ENCODE measurements at regions of chr2 and their contacts with region 1.

Region 1: GRCh38 chr2:231713730-231714430 is 5.6 kb downstream of the PTMA start:
- DNase-seq: peak; percentile 76 to 97
- H3K4me3 ChIP-seq: no peak overlapping the region
- H3K27ac ChIP-seq: peak overlapping the region; percentile 69; the same call in 1 of the 2 replicates
- H3K4me1 ChIP-seq: peaks cover 0 to 28% (median 19%) of the 10 kb centered on the region in 4 experiments; a peak in 6 of 7 replicates
- H3K27me3 ChIP-seq: no peaks in the 10 kb centered on the region
- CTCF ChIP-seq: peak in 2 of 3 experiments; percentile 90 to 91; a peak in 3 of 4 replicates
- EP300 ChIP-seq: no peak; a peak in 1 of 3 replicates
- POLR2A ChIP-seq: peak in 1 of 2 experiments; percentile 99; a peak in 2 of 3 replicates
- RAD21 ChIP-seq: peak; percentile 43 to 59

Region 2: DNA sequence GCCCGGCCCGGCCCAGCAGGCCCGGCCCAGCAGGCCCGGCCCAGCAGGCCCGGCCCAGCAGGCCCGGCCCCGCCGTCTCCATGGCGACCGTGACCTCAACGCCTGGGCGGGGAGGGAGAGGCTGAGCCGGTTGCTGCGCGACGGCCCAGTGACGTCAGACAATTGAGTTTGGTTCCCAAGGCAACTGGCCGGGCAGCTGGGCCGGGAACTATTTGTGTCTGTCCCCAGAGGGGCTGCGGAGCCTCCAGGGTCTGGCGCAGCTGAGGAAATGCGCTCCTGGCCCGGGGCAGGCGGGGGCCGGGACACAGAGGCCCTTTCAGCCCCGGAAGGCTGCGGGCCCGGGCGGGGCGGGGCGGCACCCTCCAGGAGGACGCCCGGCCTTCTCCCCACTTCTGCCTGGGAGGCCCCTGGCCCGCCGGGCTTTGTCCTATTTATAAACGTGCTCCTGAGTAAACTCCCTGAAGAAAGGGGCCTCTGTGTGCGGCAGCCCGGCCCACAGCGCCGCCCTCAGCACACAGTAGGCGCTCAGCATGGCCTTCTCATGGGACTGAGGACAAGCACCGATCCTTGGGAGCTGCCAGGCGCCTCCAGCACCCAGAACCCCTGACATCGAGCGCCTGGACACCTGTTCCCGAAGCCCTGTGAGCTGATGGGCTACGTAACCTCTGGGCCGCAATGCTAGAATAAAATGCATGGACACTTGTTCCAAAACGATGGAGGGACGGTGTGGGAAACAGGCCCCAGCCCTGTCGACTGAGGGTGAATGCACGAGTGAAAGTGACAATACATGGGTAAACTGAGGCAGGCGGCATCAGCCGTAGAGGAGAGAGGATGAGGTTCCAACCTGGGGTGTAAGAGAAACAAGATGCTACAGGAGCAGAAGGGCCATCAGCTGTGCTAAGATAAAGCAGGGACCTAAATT is 108.9 kb before region 1 on chr2:
- CTCF ChIA-PET with region 1: interaction called, 90 read pairs
- POLR2A ChIA-PET with region 1: interaction called, 141 read pairs
- DNase-seq: peak; percentile 93 to 99
- H3K4me3 ChIP-seq: peak overlapping the region; percentile 25 to 56 (median 30); a peak in 7 of 8 replicates
- H3K27ac ChIP-seq: peak overlapping the region; percentile 94
- H3K4me1 ChIP-seq: peaks cover 6 to 29% (median 21%) of the 10 kb centered on the region in 4 experiments
- H3K27me3 ChIP-seq: no peaks in the 10 kb centered on the region
- CTCF ChIP-seq: no peak
- EP300 ChIP-seq: peak in 1 of 2 experiments; percentile 30; a peak in 1 of 3 replicates
- POLR2A ChIP-seq: peak in 1 of 2 experiments; percentile 83; a peak in 1 of 3 replicates
- RAD21 ChIP-seq: peak in 1 of 2 experiments; percentile 18; a peak in 2 of 4 replicates

Region 3: DNA sequence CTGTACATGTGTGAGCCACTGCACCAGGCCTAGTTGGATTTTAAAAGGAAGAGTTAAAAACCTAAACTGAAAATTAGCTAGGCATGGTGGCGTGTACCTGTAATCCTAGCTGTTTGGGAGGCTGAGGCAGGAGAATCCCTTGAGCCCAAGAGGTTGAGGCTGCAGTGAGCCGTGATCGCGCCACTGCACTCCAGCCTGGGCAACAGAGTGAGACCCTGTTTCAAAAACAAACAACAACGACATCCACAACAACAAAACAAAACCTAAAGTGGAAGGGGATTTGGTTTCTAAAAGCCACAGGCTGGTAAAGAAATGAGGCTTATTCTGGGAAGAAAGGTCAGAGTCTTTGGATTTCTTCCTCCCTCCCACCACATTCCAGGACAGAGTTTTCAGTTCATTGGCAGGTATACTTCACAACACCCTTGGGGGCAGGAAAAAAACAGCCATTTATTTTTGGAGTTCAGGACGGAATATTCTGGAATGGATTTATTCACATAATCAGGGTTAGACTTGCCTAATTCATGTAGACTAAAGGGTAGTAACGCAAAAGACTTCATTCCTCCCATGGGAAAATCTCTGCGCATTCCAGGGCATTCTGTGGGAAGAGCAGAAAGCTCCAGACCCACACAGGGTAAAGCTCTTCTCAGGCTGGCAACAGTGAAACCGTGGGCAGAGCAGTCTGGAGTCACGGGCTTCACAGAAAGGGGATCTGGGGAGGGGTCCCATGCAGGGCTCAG is 86.3 kb before region 1 on chr2:
- CTCF ChIA-PET with region 1: interaction called, 11 read pairs
- POLR2A ChIA-PET with region 1: interaction called, 7 read pairs
- DNase-seq: no peak
- H3K4me3 ChIP-seq: no peak overlapping the region
- H3K27ac ChIP-seq: no peak overlapping the region
- H3K4me1 ChIP-seq: no peaks in the 10 kb centered on the region
- H3K27me3 ChIP-seq: no peaks in the 10 kb centered on the region
- CTCF ChIP-seq: no peak
- EP300 ChIP-seq: no peak
- POLR2A ChIP-seq: no peak
- RAD21 ChIP-seq: no peak

Region 4: GRCh38 chr2:231662028-231662810 is 51.7 kb before region 1 on chr2:
- CTCF ChIA-PET with region 1: interaction called, 555 read pairs
- POLR2A ChIA-PET with region 1: interaction called, 53 read pairs
- DNase-seq: peak; percentile 97 to 98
- H3K4me3 ChIP-seq: peak overlapping the region; percentile 14 to 54 (median 24); a peak in 6 of 8 replicates
- H3K27ac ChIP-seq: peak overlapping the region; percentile 95
- H3K4me1 ChIP-seq: peaks cover 0 to 26% (median 10%) of the 10 kb centered on the region in 4 experiments; a peak in 6 of 7 replicates
- H3K27me3 ChIP-seq: peaks cover 0 to 10% (median 3%) of the 10 kb centered on the region in 4 experiments; a peak in 5 of 7 replicates
- CTCF ChIP-seq: 0 out of 4 replicates have a peak, but pooled peaks of 1 of the 3 experiments have one; percentile 5
- EP300 ChIP-seq: peak; percentile 42 to 63; a peak in 1 of 3 replicates
- POLR2A ChIP-seq: peak in 1 of 2 experiments; percentile 79; a peak in 2 of 3 replicates
- RAD21 ChIP-seq: peak in 1 of 2 experiments; percentile 15; a peak in 1 of 4 replicates

Region 5: GRCh38 chr2:231701456-231702373 is 12.2 kb before region 1 on chr2:
- CTCF ChIA-PET with region 1: interaction called, 34 read pairs
- POLR2A ChIA-PET with region 1: interaction called, 1,080 read pairs
- DNase-seq: no peak
- H3K4me3 ChIP-seq: no peak overlapping the region
- H3K27ac ChIP-seq: no peak overlapping the region; the same call in 1 of the 2 replicates
- H3K4me1 ChIP-seq: peaks cover 0 to 10% (median 3%) of the 10 kb centered on the region in 4 experiments; a peak in 5 of 7 replicates
- H3K27me3 ChIP-seq: no peaks in the 10 kb centered on the region
- CTCF ChIP-seq: no peak
- EP300 ChIP-seq: no peak
- POLR2A ChIP-seq: no peak
- RAD21 ChIP-seq: no peak

Region 6: GRCh38 chr2:231745303-231746038 is 31.6 kb after region 1 on chr2:
- CTCF ChIA-PET with region 1: interaction called, 17 read pairs
- POLR2A ChIA-PET with region 1: interaction called, 3 read pairs
- DNase-seq: peak in 1 of 2 experiments; percentile 3
- H3K4me3 ChIP-seq: peak overlapping the region in 1 of 4 experiments; percentile 31; a peak in 1 of 8 replicates
- H3K27ac ChIP-seq: no peak overlapping the region
- H3K4me1 ChIP-seq: peaks cover 4 to 11% (median 7%) of the 10 kb centered on the region in 4 experiments; a peak in 4 of 7 replicates
- H3K27me3 ChIP-seq: no peaks in the 10 kb centered on the region
- CTCF ChIP-seq: no peak
- EP300 ChIP-seq: no peak
- POLR2A ChIP-seq: no peak
- RAD21 ChIP-seq: no peak

Region 7: DNA sequence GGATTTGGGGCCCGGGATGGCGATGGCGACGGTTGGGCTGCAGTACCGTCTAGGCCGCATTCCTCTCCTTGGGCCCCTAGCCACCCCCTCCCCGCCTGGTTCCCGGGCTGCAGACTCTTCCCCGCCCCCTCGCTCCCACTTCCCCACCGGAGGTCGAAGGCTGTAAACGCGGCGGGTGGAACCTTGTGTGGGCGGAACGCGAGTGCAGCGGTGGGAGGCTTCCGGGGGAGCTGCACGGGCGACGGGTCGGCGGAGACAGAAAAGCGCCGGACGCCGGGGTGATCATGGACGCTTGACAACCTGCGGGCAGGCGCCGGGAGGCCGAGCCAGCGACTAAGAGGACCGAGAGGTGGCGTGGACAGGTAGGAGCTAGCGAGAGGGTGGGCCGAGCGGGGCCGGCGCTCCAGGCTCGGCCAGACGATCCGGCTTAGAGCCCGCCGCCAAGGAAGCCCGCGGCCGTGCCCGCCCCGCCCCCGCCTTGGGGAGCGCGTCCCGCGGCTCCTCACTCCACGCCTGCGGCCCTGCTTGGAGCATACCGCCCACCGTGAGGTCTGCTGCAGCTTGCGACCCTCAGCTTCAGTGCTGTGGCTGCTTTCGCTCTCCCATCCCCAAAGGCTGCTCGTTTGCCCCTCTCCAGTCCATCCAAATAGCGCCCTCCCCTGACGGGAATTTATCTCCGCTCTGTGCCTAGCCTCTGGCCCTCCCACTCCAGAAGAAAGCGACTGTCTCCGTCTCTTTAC is 72.5 kb after region 1 on chr2 and contains the start of gene COPS7B:
- CTCF ChIA-PET with region 1: interaction called, 18 read pairs
- POLR2A ChIA-PET with region 1: interaction called, 18 read pairs
- DNase-seq: peak; percentile 77 to 93
- H3K4me3 ChIP-seq: peak within 1 kb of the TSS; percentile 66 to 87 (median 74)
- H3K27ac ChIP-seq: peak within 1 kb of the TSS; percentile 92
- H3K4me1 ChIP-seq: peaks cover 0 to 8% (median 2%) of the 10 kb centered on the region in 4 experiments; a peak in 3 of 7 replicates
- H3K27me3 ChIP-seq: no peaks in the 10 kb centered on the region
- CTCF ChIP-seq: peak; percentile 69 to 88 (median 81)
- EP300 ChIP-seq: peak in 1 of 2 experiments; percentile 83; a peak in 1 of 3 replicates
- POLR2A ChIP-seq: peak; percentile 23 to 86
- RAD21 ChIP-seq: peak; percentile 49 to 60
- total RNA-seq, gene COPS7B: 62.2 and 67.2 TPM in 2 replicates

Measured in H1 (cell line).